Endothelial cell of umbilical vein (primary cell): ENCODE measurements at regions of chr5 and their contacts with region 1.

Region 1: DNA sequence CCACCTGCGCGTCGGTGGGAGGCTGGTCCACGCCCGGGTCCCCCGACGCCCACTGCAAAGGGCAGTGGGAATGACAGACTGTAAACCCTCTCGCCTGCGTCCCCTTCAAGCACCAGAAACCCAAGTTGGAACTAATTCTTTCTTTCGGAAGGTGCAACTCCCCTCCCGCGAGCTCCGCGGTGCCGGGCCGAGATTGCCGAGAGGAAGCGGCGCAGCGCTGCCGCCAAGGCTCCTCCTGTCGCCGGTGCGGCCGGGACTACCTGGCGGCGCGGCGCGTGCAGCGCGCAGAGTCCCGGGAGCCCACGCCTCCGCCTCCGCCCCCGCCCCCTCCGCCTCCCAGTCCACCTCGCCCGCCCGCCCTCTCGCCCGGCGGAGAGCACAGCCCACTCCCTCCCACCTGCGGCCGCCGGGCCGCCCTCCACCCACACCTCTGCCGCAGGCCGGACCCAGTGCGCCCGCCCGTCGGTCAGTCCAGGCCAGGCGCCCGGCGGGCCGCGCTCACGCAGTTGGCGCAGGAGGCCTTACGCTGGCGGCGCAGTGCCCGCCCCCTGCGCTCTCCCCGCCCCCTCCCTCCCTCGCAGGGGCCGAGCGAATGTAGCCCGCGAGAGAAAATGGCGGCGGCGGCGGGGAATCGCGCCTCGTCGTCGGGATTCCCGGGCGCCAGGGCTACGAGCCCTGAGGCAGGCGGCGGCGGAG is at the start of gene MAP3K1:
- DNase-seq: peak; percentile 71
- H3K4me3 ChIP-seq: peak within 1 kb of the TSS; percentile 83 to 94 (median 85)
- H3K27ac ChIP-seq: peak within 1 kb of the TSS; percentile 47
- H3K4me1 ChIP-seq: peaks cover 19% of the 10 kb centered on the region
- H3K27me3 ChIP-seq: peaks cover 0 to 3% of the 10 kb centered on the region in 2 experiments
- CTCF ChIP-seq: peak in 1 of 2 donors; percentile 1
- POLR2A ChIP-seq: no peak
- total RNA-seq, gene MAP3K1: 12.5 and 14.4 TPM in 2 replicates

Region 2: GRCh38 chr5:55226027-55226933 is 1588.8 kb before region 1 on chr5:
- CTCF ChIA-PET with region 1: no interaction called
- POLR2A ChIA-PET with region 1: no interaction called
- dilution Hi-C with region 1: no loop called
- intact Hi-C with region 1: loop called (anchors 5 kb)
- DNase-seq: peak; percentile 51
- H3K4me3 ChIP-seq: peak overlapping the region in 1 of 3 experiments; percentile 25
- H3K27ac ChIP-seq: no peak overlapping the region
- H3K4me1 ChIP-seq: peaks cover 8% of the 10 kb centered on the region
- H3K27me3 ChIP-seq: peaks cover 84 to 95% of the 10 kb centered on the region in 2 experiments
- CTCF ChIP-seq: peak; percentile 75 to 77
- POLR2A ChIP-seq: no peak

Region 3: DNA sequence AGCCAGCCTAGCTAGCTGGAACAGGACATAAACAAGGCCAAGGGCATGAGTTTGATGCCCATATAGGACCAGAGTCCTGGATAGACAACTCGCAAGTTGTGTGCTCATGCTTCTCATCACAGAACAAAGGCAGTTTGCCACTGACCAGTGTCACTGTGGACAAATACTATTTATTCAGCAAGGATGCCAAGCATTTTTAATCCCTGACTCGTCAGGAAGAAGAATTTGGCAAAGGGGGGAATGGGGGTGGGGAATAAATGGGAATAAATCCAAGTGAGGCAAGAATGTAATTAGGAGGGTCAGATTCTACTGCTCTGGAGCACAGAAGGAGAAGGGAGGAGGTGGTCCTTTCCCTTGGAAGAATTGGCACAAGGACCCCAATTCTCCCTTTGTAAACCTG is 535.1 kb before region 1 on chr5:
- CTCF ChIA-PET with region 1: no interaction called
- POLR2A ChIA-PET with region 1: no interaction called
- dilution Hi-C with region 1: no loop called
- intact Hi-C with region 1: loop called (anchors 2 kb)
- DNase-seq: peak; percentile 80
- H3K4me3 ChIP-seq: no peak overlapping the region
- H3K27ac ChIP-seq: peak overlapping the region; percentile 92
- H3K4me1 ChIP-seq: peaks cover 45% of the 10 kb centered on the region
- H3K27me3 ChIP-seq: no peaks in the 10 kb centered on the region
- CTCF ChIP-seq: no peak
- POLR2A ChIP-seq: no peak

Region 4: DNA sequence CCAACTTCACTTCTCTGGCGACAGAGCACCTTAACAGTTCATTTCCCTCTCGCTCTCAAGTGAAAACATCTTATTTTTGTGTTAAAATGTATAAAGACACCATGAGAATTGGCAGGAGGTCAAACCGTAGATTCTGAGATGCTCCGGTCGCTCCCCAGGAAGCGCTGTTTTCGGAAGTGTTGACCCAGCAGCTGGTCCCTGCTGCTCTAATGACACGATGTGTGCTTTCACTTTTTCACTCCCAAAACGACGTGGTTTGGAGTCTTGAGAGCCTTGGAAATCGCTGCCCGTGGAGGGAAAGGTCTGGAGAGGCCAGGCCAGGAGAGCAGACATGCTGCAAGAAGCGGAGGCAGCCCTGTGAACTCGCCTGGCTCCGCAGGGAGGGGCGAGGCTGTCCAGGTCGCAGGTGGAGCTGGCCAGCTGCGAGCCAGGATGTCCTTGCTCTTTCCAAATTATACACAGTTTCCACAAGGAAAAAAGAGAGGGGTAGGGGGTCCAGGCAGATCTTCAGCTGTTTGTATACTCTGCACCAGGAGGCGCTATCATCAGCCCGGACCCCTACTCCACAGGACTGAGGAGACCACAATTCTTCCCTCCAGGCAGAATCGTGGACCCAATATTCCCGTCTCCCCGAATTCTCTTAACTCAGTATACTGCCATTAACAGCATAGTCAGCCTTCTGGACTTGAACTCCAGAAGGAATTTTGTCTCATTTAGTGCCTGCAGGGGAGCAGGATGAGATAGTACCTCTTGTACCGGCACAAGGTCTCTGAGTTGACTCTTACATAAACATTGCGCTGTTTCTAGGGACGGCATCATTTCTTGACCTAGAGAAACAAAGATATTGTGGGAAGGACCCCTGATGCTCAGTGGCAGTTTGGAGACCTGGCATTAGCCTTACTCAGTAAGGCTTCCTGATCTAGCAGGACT is 333.4 kb before region 1 on chr5:
- CTCF ChIA-PET with region 1: no interaction called
- POLR2A ChIA-PET with region 1: no interaction called
- dilution Hi-C with region 1: no loop called
- intact Hi-C with region 1: loop called (anchors 2 kb)
- DNase-seq: peak; percentile 53
- H3K4me3 ChIP-seq: peak overlapping the region; percentile 44 to 88 (median 87)
- H3K27ac ChIP-seq: peak overlapping the region; percentile 32
- H3K4me1 ChIP-seq: peaks cover 12% of the 10 kb centered on the region
- H3K27me3 ChIP-seq: no peaks in the 10 kb centered on the region
- CTCF ChIP-seq: peak; percentile 16 to 63
- POLR2A ChIP-seq: no peak

Region 5: DNA sequence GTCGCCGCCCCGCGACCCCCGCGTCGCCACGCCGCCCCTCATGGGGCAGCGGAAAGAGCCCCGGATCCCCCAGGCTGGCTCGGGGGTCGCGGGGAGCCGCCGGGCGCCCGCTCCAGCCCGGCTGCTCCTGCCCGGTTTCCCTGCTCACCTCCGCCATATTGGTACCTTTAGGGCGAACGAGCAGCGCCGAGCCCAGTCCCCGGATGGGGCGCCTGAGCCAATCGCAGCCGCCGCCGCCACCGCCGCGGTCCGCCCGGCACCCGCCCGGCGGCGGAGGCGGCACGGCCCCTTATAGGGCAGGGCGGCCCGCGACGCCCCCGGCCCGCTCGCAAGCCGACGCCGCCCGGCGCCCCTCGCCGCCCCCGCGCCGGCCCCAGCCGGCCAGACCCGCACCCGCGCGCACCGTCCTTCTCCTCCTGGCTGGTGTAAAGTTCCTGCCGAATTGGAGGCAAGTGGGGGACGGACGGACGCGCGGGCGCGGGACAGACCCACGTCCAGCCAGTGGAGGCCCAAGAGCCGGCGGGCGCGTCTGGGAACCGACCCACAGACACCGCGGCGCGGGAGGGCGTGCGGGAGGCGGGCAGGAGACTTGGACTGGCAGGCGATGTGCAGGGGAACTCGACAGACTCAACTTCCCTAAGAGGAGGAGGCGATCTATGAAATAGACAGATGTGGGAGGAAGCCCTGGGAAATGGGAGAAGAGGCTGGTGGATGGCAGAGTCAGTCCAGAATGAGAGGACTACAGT is 137.0 kb after region 1 on chr5 and contains the start of gene MIER3:
- CTCF ChIA-PET with region 1: no interaction called
- POLR2A ChIA-PET with region 1: no interaction called
- dilution Hi-C with region 1: no loop called
- intact Hi-C with region 1: loop called (anchors 2 kb)
- DNase-seq: peak; percentile 71
- H3K4me3 ChIP-seq: peak within 1 kb of the TSS; percentile 72 to 82 (median 77)
- H3K27ac ChIP-seq: peak within 1 kb of the TSS; percentile 49
- H3K4me1 ChIP-seq: peaks cover 12% of the 10 kb centered on the region
- H3K27me3 ChIP-seq: peaks cover 15 to 24% of the 10 kb centered on the region in 2 experiments
- CTCF ChIP-seq: no peak
- POLR2A ChIP-seq: no peak
- total RNA-seq, gene MIER3: 20.5 and 21.9 TPM in 2 replicates

Region 6: DNA sequence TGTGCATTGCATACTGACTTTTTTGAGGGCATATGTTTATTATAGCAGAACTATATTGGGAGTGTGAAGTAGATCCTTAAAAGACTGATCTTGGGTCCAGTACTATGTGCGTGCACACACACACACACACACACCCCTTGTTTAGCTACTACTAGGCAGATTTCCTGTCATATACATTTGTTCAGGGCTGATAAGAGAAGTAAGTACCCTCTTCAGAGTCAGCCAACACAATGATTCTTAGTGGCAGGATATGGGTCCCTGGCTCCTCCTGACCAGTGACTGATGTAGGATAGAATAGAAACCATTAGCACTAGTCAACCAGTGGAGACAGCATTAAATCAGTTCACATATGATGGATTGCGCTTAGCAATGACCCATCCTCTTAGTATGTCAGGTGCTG is 213.1 kb after region 1 on chr5:
- CTCF ChIA-PET with region 1: no interaction called
- POLR2A ChIA-PET with region 1: no interaction called
- dilution Hi-C with region 1: no loop called
- intact Hi-C with region 1: no loop called
- DNase-seq: peak; percentile 28
- H3K4me3 ChIP-seq: no peak overlapping the region
- H3K27ac ChIP-seq: no peak overlapping the region
- H3K4me1 ChIP-seq: no peaks in the 10 kb centered on the region
- H3K27me3 ChIP-seq: peaks cover 3 to 11% of the 10 kb centered on the region in 2 experiments
- CTCF ChIP-seq: no peak
- POLR2A ChIP-seq: no peak